ENCODE measurements at regions of chr9 and their contacts with region 1.

Region 1: DNA sequence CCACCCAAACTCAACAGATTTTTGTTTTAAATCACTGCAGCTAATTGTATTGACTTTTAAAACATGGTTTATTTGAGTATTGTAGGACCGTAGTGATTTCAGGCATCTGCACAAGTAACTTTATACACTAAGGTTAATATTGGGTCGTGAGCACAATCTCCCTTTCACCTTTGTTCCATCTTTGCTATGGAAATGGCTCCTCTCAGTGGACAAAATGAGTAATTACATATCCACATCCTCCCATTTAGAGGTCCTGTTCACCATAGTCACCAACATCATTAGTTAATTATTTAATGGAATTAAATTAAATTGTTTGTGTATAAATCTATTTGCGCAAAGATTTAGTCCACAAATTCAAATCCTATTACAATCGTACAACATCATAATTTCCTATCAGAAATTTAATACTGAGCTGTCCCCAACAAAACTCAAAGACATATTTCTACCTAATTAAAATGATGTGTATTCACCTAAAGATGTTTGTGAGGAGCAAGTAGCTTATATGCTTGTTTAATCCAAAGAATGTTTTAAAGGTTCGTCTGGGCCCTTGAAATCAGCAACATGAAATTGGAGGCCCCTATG is 173.0 kb upstream of the DAPK1 start:
- DNase-seq: peak in 1 of 2 experiments; percentile 18
- H3K4me3 ChIP-seq: no peak overlapping the region
- H3K4me3 Mint-ChIP-seq: no peak overlapping the region
- H3K27ac Mint-ChIP-seq: no peak overlapping the region
- H3K4me1 ChIP-seq: no peaks in the 10 kb centered on the region
- H3K4me1 Mint-ChIP-seq: no peaks in the 10 kb centered on the region
- H3K27me3 ChIP-seq: no peaks in the 10 kb centered on the region
- H3K27me3 Mint-ChIP-seq: peaks cover 3% of the 10 kb centered on the region
- CTCF ChIP-seq: peak; percentile 35 to 40

Region 2: DNA sequence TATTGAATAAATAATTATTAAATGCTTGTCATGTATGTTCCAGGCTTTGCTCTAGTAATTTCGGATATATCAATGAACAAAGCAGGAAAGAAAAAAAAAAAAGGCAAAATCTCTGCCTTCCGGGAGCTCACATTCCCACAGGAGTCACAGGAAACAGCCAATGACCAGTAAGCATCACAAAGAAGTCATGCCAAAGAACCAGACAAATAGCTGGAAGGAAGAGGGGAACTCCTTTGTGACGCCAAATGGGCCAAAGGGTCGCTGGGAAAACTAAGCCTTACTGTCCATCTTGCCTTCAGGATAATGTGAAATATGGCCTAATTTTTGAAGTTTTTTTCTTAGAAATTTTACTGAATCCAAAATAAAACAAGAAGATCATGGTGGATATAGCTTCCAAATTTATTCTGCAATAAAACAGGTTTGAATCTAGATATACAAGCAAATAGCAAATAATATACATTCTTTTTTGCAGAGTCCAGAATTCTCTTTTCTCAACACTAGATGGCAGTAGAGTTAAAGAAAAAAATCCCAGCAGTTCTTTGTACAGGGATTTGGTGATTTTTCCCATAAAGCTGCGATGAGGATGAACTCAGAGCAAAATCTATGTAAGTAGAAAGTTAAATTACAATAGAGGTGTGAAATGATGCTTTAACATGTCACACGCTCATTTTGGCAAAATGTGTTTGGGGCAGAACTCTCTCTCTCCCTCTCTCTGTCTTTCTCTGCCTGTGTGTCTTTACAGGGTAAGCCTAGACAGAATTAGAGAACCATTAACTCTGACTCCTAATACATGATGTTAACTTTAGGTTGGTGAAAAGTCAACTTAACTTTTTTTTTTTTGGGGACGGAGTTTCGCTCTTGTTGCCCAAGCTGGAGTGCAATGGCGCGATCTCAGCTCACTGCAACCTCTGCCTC is 910.5 kb before region 1 on chr9:
- CTCF ChIA-PET with region 1: no interaction called
- POLR2A ChIA-PET with region 1: no interaction called
- intact Hi-C with region 1: loop called (anchors 1 kb)
- DNase-seq: no peak
- H3K4me3 ChIP-seq: no peak overlapping the region
- H3K4me3 Mint-ChIP-seq: no peak overlapping the region
- H3K27ac Mint-ChIP-seq: no peak overlapping the region
- H3K4me1 ChIP-seq: no peaks in the 10 kb centered on the region
- H3K4me1 Mint-ChIP-seq: no peaks in the 10 kb centered on the region
- H3K27me3 ChIP-seq: no peaks in the 10 kb centered on the region
- H3K27me3 Mint-ChIP-seq: no peaks in the 10 kb centered on the region
- CTCF ChIP-seq: peak; percentile 36 to 37

Region 3: GRCh38 chr9:86434039-86434726 is 890.5 kb before region 1 on chr9:
- CTCF ChIA-PET with region 1: no interaction called
- POLR2A ChIA-PET with region 1: no interaction called
- intact Hi-C with region 1: loop called (anchors 5 kb)
- DNase-seq: peak in 1 of 2 experiments; percentile 16
- H3K4me3 ChIP-seq: no peak overlapping the region
- H3K4me3 Mint-ChIP-seq: peak overlapping the region; percentile 19
- H3K27ac Mint-ChIP-seq: no peak overlapping the region
- H3K4me1 ChIP-seq: no peaks in the 10 kb centered on the region
- H3K4me1 Mint-ChIP-seq: no peaks in the 10 kb centered on the region
- H3K27me3 ChIP-seq: no peaks in the 10 kb centered on the region
- H3K27me3 Mint-ChIP-seq: no peaks in the 10 kb centered on the region
- CTCF ChIP-seq: peak; percentile 40 to 51

Region 4: GRCh38 chr9:86486891-86487837 is 837.5 kb before region 1 on chr9:
- CTCF ChIA-PET with region 1: no interaction called
- POLR2A ChIA-PET with region 1: no interaction called
- intact Hi-C with region 1: loop called (anchors 1 kb)
- DNase-seq: no peak
- H3K4me3 ChIP-seq: no peak overlapping the region
- H3K4me3 Mint-ChIP-seq: no peak overlapping the region
- H3K27ac Mint-ChIP-seq: no peak overlapping the region
- H3K4me1 ChIP-seq: no peaks in the 10 kb centered on the region
- H3K4me1 Mint-ChIP-seq: no peaks in the 10 kb centered on the region
- H3K27me3 ChIP-seq: no peaks in the 10 kb centered on the region
- H3K27me3 Mint-ChIP-seq: peaks cover 2% of the 10 kb centered on the region
- CTCF ChIP-seq: peak; percentile 18 to 36

Region 5: GRCh38 chr9:87107072-87107471 is 217.6 kb before region 1 on chr9:
- CTCF ChIA-PET with region 1: no interaction called
- POLR2A ChIA-PET with region 1: no interaction called
- intact Hi-C with region 1: loop called (anchors 2 kb)
- DNase-seq: no peak
- H3K4me3 ChIP-seq: no peak overlapping the region
- H3K4me3 Mint-ChIP-seq: no peak overlapping the region
- H3K27ac Mint-ChIP-seq: no peak overlapping the region
- H3K4me1 ChIP-seq: no peaks in the 10 kb centered on the region
- H3K4me1 Mint-ChIP-seq: no peaks in the 10 kb centered on the region
- H3K27me3 ChIP-seq: no peaks in the 10 kb centered on the region
- H3K27me3 Mint-ChIP-seq: peaks cover 7% of the 10 kb centered on the region
- CTCF ChIP-seq: peak in 1 of 2 experiments; percentile 22

Region 6: GRCh38 chr9:87113874-87114273 is 210.8 kb before region 1 on chr9:
- CTCF ChIA-PET with region 1: no interaction called
- POLR2A ChIA-PET with region 1: no interaction called
- intact Hi-C with region 1: loop called (anchors 2 kb)
- DNase-seq: no peak
- H3K4me3 ChIP-seq: no peak overlapping the region
- H3K4me3 Mint-ChIP-seq: no peak overlapping the region
- H3K27ac Mint-ChIP-seq: no peak overlapping the region
- H3K4me1 ChIP-seq: no peaks in the 10 kb centered on the region
- H3K4me1 Mint-ChIP-seq: no peaks in the 10 kb centered on the region
- H3K27me3 ChIP-seq: no peaks in the 10 kb centered on the region
- H3K27me3 Mint-ChIP-seq: peaks cover 9% of the 10 kb centered on the region
- CTCF ChIP-seq: no peak

Measured in Caco-2 (cell line).